CD4-positive, alpha-beta memory T cell (primary cell): ENCODE measurements at regions of chr6 and their contacts with region 1.

Region 1: DNA sequence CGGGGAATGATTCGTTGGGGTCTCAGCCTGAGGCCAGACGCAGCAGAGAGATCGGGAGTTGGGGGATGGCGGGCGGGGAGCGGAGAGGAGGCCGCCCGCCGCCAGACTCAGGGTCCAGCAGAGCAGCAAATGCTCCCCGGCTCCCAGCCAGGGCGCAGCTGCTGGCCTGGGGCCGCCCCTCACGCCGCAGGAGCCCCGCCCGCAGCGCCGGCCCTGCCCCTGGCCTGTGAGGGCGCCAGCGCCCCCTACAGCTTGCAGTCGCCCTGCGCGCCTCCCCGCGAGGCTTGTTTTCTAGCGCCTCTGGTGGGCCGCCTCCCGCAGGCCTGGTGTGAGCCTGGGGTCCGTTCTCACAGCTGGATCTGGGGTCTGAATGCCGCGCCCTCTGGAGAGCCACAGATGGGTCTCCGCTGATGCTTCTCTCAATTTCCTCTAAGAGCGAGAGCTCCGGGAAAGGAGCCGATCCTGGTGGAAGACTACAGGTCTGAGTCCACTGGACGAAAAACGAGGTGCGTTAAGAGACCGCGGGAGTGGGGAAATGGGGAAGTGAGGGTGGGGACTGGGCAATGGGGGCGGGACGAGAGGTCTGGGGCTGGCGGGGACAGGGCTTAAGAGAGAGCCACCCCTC is 29.9 kb downstream of the TRIM38 start:
- DNase-seq: peak; percentile 85 to 94 (median 89)
- H3K4me3 ChIP-seq: peak overlapping the region; percentile 72 to 95
- H3K4me3 Mint-ChIP-seq: peak overlapping the region; percentile 91 to 95 (median 94)
- H3K27ac ChIP-seq: peak overlapping the region; percentile 64
- H3K27ac Mint-ChIP-seq: peak overlapping the region; percentile 89 to 96 (median 94)
- H3K4me1 ChIP-seq: no peaks in the 10 kb centered on the region
- H3K4me1 Mint-ChIP-seq: peaks cover 9 to 23% (median 16%) of the 10 kb centered on the region in 4 donors
- H3K27me3 ChIP-seq: no peaks in the 10 kb centered on the region
- H3K27me3 Mint-ChIP-seq: no peaks in the 10 kb centered on the region

Region 2: DNA sequence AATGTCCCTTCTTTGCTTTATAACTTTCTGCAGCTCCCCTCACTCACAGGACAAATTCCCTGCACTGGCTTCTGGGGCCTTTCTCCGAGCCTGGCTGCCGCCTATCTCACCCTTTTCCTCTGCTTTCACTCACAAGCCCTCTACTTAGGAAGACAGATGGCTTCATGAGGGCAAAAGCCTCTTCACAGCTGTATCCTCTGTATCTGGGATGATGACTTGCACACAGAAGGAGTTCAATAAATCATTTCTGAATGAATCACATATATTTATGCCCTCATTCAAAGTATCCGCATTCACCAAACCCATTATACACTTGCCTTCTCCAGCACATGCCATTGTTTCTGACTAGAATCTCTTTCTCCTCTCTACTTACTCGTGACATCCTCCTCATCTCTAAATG is 897.8 kb before region 1 on chr6:
- CTCF ChIA-PET with region 1: no interaction called
- POLR2A ChIA-PET with region 1: no interaction called
- intact Hi-C with region 1: no loop called
- DNase-seq: no peak
- H3K4me3 ChIP-seq: no peak overlapping the region
- H3K4me3 Mint-ChIP-seq: no peak overlapping the region
- H3K27ac ChIP-seq: no peak overlapping the region
- H3K27ac Mint-ChIP-seq: peak overlapping the region; percentile 11 to 61 (median 37)
- H3K4me1 ChIP-seq: no peaks in the 10 kb centered on the region
- H3K4me1 Mint-ChIP-seq: peaks cover 4 to 13% (median 8%) of the 10 kb centered on the region in 4 donors
- H3K27me3 ChIP-seq: no peaks in the 10 kb centered on the region
- H3K27me3 Mint-ChIP-seq: no peaks in the 10 kb centered on the region

Region 3: GRCh38 chr6:25788305-25788922 is 204.1 kb before region 1 on chr6:
- CTCF ChIA-PET with region 1: interaction called, 39 read pairs
- POLR2A ChIA-PET with region 1: interaction called, 4 read pairs
- intact Hi-C with region 1: loop called (anchors 1 kb)
- DNase-seq: peak; percentile 11 to 40 (median 37)
- H3K4me3 ChIP-seq: no peak overlapping the region
- H3K4me3 Mint-ChIP-seq: no peak overlapping the region
- H3K27ac ChIP-seq: no peak overlapping the region
- H3K27ac Mint-ChIP-seq: no peak overlapping the region
- H3K4me1 ChIP-seq: no peaks in the 10 kb centered on the region
- H3K4me1 Mint-ChIP-seq: peaks cover 0 to 3% (median 0%) of the 10 kb centered on the region in 4 donors
- H3K27me3 ChIP-seq: no peaks in the 10 kb centered on the region
- H3K27me3 Mint-ChIP-seq: peaks cover 0 to under 1% of the 10 kb centered on the region in 2 donors

Region 4: DNA sequence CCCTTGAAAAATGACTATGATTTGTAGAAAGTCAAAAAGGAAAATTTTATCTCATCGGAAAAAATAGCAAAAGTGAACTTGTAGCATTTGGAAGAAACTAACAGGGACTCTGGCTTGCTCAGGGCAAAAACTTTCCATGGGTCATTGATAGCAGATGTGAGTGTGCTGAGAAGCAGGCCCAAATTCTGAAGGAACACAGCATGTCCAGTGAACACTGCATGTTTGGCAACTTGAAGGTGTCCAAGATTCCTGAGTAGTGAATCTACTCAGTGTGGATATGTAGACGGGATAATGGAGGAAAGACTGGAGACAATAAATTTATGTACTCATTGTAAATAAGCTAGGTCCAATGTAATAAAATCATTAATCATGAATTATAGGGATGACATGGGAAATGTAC is 70.2 kb before region 1 on chr6:
- CTCF ChIA-PET with region 1: no interaction called
- POLR2A ChIA-PET with region 1: no interaction called
- intact Hi-C with region 1: no loop called
- DNase-seq: no peak
- H3K4me3 ChIP-seq: no peak overlapping the region
- H3K4me3 Mint-ChIP-seq: no peak overlapping the region
- H3K27ac ChIP-seq: no peak overlapping the region
- H3K27ac Mint-ChIP-seq: no peak overlapping the region
- H3K4me1 ChIP-seq: no peaks in the 10 kb centered on the region
- H3K4me1 Mint-ChIP-seq: no peaks in the 10 kb centered on the region
- H3K27me3 ChIP-seq: no peaks in the 10 kb centered on the region
- H3K27me3 Mint-ChIP-seq: peaks cover 3 to 6% of the 10 kb centered on the region in 2 donors

Region 5: DNA sequence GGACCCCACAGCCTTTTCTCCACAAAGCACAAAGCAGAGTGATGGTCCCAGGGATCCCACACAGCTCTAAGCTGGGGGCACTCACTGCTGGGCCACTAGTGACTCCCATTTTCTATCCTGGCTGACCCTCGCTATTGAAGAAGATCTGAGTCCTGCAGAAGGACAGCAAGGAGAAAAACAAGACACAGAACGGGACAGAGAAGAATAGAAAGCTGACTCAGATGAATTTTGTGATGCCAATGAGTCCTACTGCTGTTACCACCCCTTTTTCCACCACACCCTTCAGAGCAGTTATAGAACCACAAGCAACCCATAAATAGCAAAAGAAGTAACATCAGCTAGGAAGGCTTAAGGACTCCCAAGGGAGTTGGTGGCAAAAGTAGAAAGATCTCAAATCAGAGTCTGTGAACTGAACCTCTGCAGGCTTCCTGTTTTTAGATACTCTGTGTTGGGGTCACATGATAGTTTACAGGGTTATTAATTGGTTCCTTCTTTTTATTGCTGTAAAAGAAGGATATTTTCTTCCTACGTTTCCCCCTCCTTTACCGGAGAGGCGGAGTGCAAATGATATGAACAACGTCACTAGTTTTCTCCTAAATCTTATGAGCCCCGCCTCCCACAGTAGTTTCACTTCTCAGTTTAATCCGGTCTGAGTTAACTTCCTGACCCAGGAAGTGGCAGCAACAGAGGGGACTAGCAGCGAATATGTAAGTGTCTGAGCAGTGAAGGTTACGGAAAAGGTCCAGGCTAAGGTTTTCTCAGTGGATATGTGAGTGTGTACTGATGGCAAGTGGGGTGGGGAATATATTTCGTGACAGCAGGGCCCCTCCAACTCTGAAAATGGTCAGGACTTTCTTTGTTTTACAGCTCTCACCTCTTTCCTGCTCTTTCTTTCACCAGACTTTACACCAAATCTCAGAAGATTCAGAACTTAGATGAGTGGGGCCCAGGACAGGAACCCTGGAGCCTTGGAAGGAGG is 30.1 kb before region 1 on chr6 and contains the start of gene TRIM38:
- CTCF ChIA-PET with region 1: interaction called, 43 read pairs
- POLR2A ChIA-PET with region 1: interaction called, 28 read pairs
- intact Hi-C with region 1: loop called (anchors 1 kb)
- DNase-seq: peak; percentile 82 to 95 (median 87)
- H3K4me3 ChIP-seq: peak within 1 kb of the TSS; percentile 66 to 90
- H3K4me3 Mint-ChIP-seq: peak within 1 kb of the TSS; percentile 98 to 100 (median 98)
- H3K27ac ChIP-seq: peak within 1 kb of the TSS; percentile 92
- H3K27ac Mint-ChIP-seq: peak within 1 kb of the TSS; percentile 92 to 100 (median 99)
- H3K4me1 ChIP-seq: peaks cover 84% of the 10 kb centered on the region
- H3K4me1 Mint-ChIP-seq: peaks cover 64 to 93% (median 79%) of the 10 kb centered on the region in 4 donors
- H3K27me3 ChIP-seq: no peaks in the 10 kb centered on the region
- H3K27me3 Mint-ChIP-seq: no peaks in the 10 kb centered on the region
- total RNA-seq, gene TRIM38: 37.7 TPM

Region 6: GRCh38 chr6:25980935-25981334 is 11.6 kb before region 1 on chr6:
- CTCF ChIA-PET with region 1: interaction called, 32 read pairs
- POLR2A ChIA-PET with region 1: interaction called, 6 read pairs
- intact Hi-C with region 1: no loop called
- DNase-seq: no peak
- H3K4me3 ChIP-seq: no peak overlapping the region
- H3K4me3 Mint-ChIP-seq: no peak overlapping the region
- H3K27ac ChIP-seq: no peak overlapping the region
- H3K27ac Mint-ChIP-seq: peak overlapping the region in 3 of 7 donors; percentile 11 to 67 (median 60)
- H3K4me1 ChIP-seq: peaks cover 4% of the 10 kb centered on the region
- H3K4me1 Mint-ChIP-seq: peaks cover 2 to 20% (median 12%) of the 10 kb centered on the region in 4 donors
- H3K27me3 ChIP-seq: no peaks in the 10 kb centered on the region
- H3K27me3 Mint-ChIP-seq: no peaks in the 10 kb centered on the region

Region 7: DNA sequence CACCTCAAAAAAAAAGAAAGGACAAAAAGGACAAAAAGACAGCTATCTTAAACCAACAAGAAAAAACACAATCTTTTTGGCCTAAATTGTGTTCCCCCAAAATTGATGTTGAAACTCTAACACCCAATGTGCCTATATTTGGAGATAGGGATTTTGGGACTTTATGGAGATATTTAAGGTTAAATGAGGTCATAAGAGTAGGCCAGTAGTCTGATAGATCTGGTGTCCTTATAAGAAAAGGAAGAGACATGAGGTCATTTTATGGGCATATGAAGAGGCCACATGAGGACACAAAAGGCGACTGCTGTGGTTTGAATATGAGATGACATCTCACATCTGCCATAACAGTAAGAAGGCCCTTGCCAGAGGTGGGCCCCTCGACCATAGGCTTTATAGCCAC is 19.5 kb after region 1 on chr6:
- CTCF ChIA-PET with region 1: interaction called, 70 read pairs
- POLR2A ChIA-PET with region 1: interaction called, 40 read pairs
- intact Hi-C with region 1: no loop called
- DNase-seq: no peak
- H3K4me3 ChIP-seq: no peak overlapping the region
- H3K4me3 Mint-ChIP-seq: no peak overlapping the region
- H3K27ac ChIP-seq: no peak overlapping the region
- H3K27ac Mint-ChIP-seq: no peak overlapping the region
- H3K4me1 ChIP-seq: peaks cover 8% of the 10 kb centered on the region
- H3K4me1 Mint-ChIP-seq: peaks cover 0 to 7% (median 4%) of the 10 kb centered on the region in 4 donors
- H3K27me3 ChIP-seq: no peaks in the 10 kb centered on the region
- H3K27me3 Mint-ChIP-seq: no peaks in the 10 kb centered on the region

Region 8: DNA sequence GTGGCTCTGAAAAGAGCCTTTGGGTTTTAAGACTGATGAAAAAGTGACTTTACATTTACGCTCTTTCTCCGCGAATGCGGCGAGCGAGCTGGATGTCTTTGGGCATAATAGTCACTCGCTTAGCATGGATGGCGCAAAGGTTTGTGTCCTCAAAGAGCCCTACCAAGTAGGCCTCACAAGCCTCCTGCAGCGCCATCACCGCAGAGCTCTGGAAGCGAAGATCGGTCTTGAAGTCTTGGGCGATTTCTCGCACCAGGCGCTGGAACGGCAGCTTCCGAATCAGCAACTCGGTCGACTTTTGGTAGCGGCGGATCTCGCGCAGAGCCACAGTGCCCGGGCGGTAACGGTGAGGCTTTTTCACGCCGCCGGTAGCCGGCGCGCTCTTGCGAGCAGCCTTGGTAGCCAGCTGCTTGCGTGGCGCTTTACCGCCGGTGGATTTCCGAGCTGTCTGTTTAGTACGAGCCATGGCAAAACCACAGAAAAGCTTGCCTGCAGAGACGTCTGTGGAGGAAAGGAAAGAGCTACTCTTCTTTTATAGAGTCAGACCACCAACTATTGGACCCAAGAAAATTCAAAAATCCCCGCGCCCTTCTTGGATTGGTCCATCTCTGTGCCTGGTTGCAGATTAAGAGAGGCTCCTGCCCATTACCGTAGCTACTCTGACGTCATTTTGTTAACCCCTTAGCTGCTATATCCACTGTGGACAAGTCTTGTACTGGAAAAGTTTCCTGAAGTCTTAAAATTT is 39.2 kb after region 1 on chr6:
- CTCF ChIA-PET with region 1: interaction called, 13 read pairs
- POLR2A ChIA-PET with region 1: interaction called, 29 read pairs
- intact Hi-C with region 1: no loop called
- DNase-seq: peak; percentile 86 to 94 (median 89)
- H3K4me3 ChIP-seq: peak overlapping the region; percentile 53 to 67
- H3K4me3 Mint-ChIP-seq: peak overlapping the region; percentile 91 to 99 (median 94)
- H3K27ac ChIP-seq: peak overlapping the region; percentile 71
- H3K27ac Mint-ChIP-seq: peak overlapping the region; percentile 89 to 98 (median 96)
- H3K4me1 ChIP-seq: peaks cover 35% of the 10 kb centered on the region
- H3K4me1 Mint-ChIP-seq: peaks cover 33 to 54% (median 44%) of the 10 kb centered on the region in 4 donors
- H3K27me3 ChIP-seq: no peaks in the 10 kb centered on the region
- H3K27me3 Mint-ChIP-seq: peaks cover 0 to 3% of the 10 kb centered on the region in 2 donors